ENCODE measurements at regions of chr1 and their contacts with region 1.

Region 1: DNA sequence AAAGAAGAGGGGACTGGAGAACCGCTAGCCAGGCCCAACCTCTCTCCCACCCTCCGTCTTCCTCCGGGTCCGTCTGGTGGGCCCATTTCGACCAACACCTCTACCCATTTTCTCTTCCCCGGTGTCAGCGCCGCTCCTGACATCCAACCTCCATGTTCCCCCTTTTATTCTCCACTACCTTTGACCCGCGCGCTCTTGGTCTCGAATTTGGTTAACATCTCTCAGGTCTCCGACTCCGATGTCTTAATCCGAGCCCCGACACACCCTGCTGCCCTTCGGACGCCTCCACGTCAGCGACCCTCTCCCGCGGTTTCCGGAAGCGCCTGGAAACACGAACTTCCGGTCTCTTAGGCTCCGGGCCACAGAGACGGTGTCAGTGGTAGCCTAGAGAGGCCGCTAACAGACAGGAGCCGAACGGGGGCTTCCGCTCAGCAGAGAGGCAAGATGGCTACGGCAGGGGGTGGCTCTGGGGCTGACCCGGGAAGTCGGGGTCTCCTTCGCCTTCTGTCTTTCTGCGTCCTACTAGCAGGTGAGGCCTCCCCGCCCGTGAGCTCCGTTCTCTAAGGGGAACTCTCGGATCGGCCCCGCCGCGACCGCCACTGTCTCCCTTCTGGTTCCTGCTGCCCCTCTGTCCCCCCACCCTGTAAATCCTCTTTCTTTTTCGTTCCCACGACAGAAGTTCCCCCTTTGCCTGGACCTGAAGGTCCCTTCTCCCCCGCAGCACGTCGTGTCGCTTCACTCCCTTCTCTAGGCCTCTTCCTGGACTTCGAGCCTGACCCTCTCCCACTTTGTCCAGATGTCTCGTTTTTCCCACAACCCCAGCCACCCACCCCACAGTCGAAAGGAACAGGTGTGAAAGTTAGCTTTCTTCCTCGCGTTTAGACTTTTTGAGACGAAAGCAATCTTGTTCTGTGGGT is at the starts of genes COPA and NCSTN:
- DNase-seq: peak; percentile 83 to 96
- ATAC-seq: peak; percentile 95 to 99 (median 96)
- H3K4me3 ChIP-seq: peak within 1 kb of the TSS; percentile 89
- H3K4me3 Mint-ChIP-seq: peak within 1 kb of the TSS; percentile 100
- H3K27ac ChIP-seq: peak within 1 kb of the TSS; percentile 93
- H3K27ac Mint-ChIP-seq: peak within 1 kb of the TSS; percentile 99 to 100
- H3K4me1 ChIP-seq: peaks cover 16% of the 10 kb centered on the region
- H3K4me1 Mint-ChIP-seq: peaks cover 40 to 45% of the 10 kb centered on the region in 2 donors
- H3K27me3 ChIP-seq: no peaks in the 10 kb centered on the region
- H3K27me3 Mint-ChIP-seq: no peaks in the 10 kb centered on the region
- CTCF ChIP-seq: no peak
- total RNA-seq, gene COPA: 140 to 167 (median 148) TPM
- total RNA-seq, gene NCSTN: 104 to 140 (median 110) TPM

Region 2: GRCh38 chr1:160284782-160285344 is 58.3 kb before region 1 on chr1 and contains the start of gene PEX19:
- intact Hi-C with region 1: loop called (anchors 1 kb)
- DNase-seq: peak; percentile 93 to 96
- ATAC-seq: peak; percentile 100
- H3K4me3 ChIP-seq: peak within 1 kb of the TSS; percentile 94
- H3K4me3 Mint-ChIP-seq: peak within 1 kb of the TSS; percentile 98
- H3K27ac ChIP-seq: peak within 1 kb of the TSS; percentile 76
- H3K27ac Mint-ChIP-seq: peak within 1 kb of the TSS; percentile 87 to 97
- H3K4me1 ChIP-seq: peaks cover 23% of the 10 kb centered on the region
- H3K4me1 Mint-ChIP-seq: peaks cover 25 to 26% of the 10 kb centered on the region in 2 donors
- H3K27me3 ChIP-seq: no peaks in the 10 kb centered on the region
- H3K27me3 Mint-ChIP-seq: no peaks in the 10 kb centered on the region
- CTCF ChIP-seq: no peak
- total RNA-seq, gene PEX19: 41.5 to 48.8 (median 47.8) TPM

Region 3: GRCh38 chr1:160420881-160421842 is 78.0 kb after region 1 on chr1:
- intact Hi-C with region 1: no loop called
- DNase-seq: no peak
- ATAC-seq: no peak
- H3K4me3 ChIP-seq: no peak overlapping the region
- H3K4me3 Mint-ChIP-seq: no peak overlapping the region
- H3K27ac ChIP-seq: no peak overlapping the region
- H3K27ac Mint-ChIP-seq: no peak overlapping the region
- H3K4me1 ChIP-seq: no peaks in the 10 kb centered on the region
- H3K4me1 Mint-ChIP-seq: no peaks in the 10 kb centered on the region
- H3K27me3 ChIP-seq: no peaks in the 10 kb centered on the region
- H3K27me3 Mint-ChIP-seq: peaks cover 0 to 3% of the 10 kb centered on the region in 2 donors
- CTCF ChIP-seq: no peak

Measured in natural killer cell (primary cell).